ENCODE measurements at regions of chr21 and their contacts with region 1.

Region 1: DNA sequence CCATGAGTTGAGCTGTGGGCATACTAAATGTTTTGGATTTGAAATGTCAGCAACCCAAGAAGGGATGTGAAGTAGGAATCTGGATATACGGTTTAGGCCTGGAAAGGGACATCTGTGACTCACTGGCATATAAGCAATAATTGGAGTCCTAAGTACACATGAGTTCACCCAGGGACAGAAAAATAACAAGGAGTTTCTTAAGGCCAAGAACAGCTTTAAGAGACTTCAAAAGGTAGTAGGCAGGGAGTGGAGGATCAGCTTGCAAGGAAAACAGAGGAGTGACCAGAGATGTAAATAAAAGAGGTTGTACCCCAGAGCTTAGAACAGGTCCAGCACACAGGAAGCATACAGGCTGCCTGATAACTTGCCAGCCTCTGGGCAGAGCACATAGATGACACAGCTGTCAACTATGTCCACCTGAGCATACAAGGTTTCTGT is 28.1 kb downstream of the TMEM50B start:
- DNase-seq: no peak
- ATAC-seq: no peak
- H3K4me3 ChIP-seq: no peak overlapping the region
- H3K4me3 Mint-ChIP-seq: no peak overlapping the region
- H3K27ac ChIP-seq: no peak overlapping the region
- H3K27ac Mint-ChIP-seq: no peak overlapping the region
- H3K4me1 ChIP-seq: no peaks in the 10 kb centered on the region
- H3K4me1 Mint-ChIP-seq: no peaks in the 10 kb centered on the region
- H3K27me3 ChIP-seq: no peaks in the 10 kb centered on the region
- H3K27me3 Mint-ChIP-seq: no peaks in the 10 kb centered on the region
- CTCF ChIP-seq: no peak

Region 2: GRCh38 chr21:32653311-32653901 is 798.2 kb before region 1 on chr21:
- CTCF ChIA-PET with region 1: no interaction called
- POLR2A ChIA-PET with region 1: no interaction called
- intact Hi-C with region 1: loop called (anchors 5 kb)
- DNase-seq: peak; percentile 56
- ATAC-seq: peak; percentile 39
- H3K4me3 ChIP-seq: no peak overlapping the region
- H3K4me3 Mint-ChIP-seq: no peak overlapping the region
- H3K27ac ChIP-seq: no peak overlapping the region
- H3K27ac Mint-ChIP-seq: no peak overlapping the region
- H3K4me1 ChIP-seq: no peaks in the 10 kb centered on the region
- H3K4me1 Mint-ChIP-seq: no peaks in the 10 kb centered on the region
- H3K27me3 ChIP-seq: no peaks in the 10 kb centered on the region
- H3K27me3 Mint-ChIP-seq: no peaks in the 10 kb centered on the region
- CTCF ChIP-seq: peak; percentile 75

Region 3: DNA sequence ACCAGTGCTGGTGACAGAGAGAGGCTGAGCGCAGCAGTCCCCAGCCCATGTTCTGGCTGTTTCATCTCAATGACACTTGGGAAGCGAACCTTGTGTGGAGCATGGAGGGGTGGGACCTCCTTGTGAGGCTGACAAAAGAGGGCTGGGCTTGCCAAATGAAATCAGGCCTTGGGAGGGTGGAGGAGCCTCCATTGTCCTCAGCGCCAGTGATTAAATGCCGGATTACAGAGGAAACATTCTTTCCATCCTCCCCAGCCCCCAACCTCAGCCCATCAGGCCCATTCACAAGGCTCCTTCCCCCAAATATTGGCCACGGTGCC is 616.8 kb before region 1 on chr21:
- CTCF ChIA-PET with region 1: no interaction called
- POLR2A ChIA-PET with region 1: no interaction called
- intact Hi-C with region 1: loop called (anchors 5 kb)
- DNase-seq: no peak
- ATAC-seq: no peak
- H3K4me3 ChIP-seq: no peak overlapping the region
- H3K4me3 Mint-ChIP-seq: no peak overlapping the region
- H3K27ac ChIP-seq: no peak overlapping the region
- H3K27ac Mint-ChIP-seq: no peak overlapping the region
- H3K4me1 ChIP-seq: no peaks in the 10 kb centered on the region
- H3K4me1 Mint-ChIP-seq: no peaks in the 10 kb centered on the region
- H3K27me3 ChIP-seq: peaks cover 0 to 11% (median 4%) of the 10 kb centered on the region in 4 experiments
- H3K27me3 Mint-ChIP-seq: peaks cover 30% of the 10 kb centered on the region
- CTCF ChIP-seq: no peak

Region 4: DNA sequence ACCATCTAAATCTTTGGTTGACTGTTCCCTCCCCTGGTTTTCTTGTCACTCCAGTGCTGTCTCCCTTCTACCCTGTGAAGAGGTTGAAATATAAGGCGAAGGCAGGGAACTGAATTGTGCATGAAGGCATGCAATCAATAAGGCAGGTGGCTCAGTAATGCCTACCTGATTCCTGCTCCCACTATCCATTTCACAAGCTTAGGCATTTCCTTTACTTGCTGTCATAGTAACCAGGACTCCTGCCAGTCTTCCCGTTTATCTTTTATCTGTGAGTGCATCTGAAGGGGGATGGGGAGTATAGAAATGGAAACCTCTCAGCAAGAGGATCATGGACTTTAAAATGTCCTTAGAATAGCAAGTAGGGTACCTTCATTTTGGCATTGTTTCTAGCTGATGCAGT is 662.2 kb after region 1 on chr21:
- CTCF ChIA-PET with region 1: no interaction called
- POLR2A ChIA-PET with region 1: no interaction called
- intact Hi-C with region 1: no loop called
- DNase-seq: no peak
- ATAC-seq: no peak
- H3K4me3 ChIP-seq: no peak overlapping the region
- H3K4me3 Mint-ChIP-seq: no peak overlapping the region
- H3K27ac ChIP-seq: no peak overlapping the region
- H3K27ac Mint-ChIP-seq: no peak overlapping the region
- H3K4me1 ChIP-seq: no peaks in the 10 kb centered on the region
- H3K4me1 Mint-ChIP-seq: peaks cover 31% of the 10 kb centered on the region
- H3K27me3 ChIP-seq: no peaks in the 10 kb centered on the region
- H3K27me3 Mint-ChIP-seq: no peaks in the 10 kb centered on the region
- CTCF ChIP-seq: no peak

Measured in B cell (primary cell).